ENCODE measurements at regions of chr18 and their contacts with region 1.

Region 1: DNA sequence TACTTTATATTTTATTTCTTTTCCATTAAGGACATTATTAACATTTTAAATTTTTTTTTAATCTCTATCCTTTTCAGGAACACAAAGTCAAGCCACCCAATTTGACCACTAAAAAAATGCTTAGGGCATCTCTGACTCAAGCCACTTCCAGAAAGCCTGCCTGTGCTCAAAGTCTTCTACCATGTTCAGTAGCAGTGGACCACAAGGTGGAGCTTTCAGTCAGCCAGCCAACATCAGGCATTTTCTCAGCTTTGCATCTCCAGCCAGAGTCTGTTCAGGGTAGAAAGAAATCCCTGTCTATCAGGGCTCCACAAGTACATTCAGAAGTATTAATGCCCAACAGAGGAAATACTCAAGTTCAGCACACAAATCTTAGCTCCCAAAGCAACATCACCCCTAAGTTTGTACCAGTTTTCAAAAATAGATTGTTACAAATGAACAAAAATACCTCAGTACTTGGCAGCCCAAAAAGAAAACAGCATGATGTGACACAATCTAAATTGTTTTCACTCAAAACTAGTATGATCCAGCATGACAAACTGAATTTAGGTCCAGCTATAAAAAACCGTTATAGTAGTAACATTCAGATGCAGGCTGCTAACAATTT is 37.6 kb downstream of the C18orf63 start:
- DNase-seq: peak in 4 of 5 donors; percentile 63 to 73 (median 68)
- ATAC-seq: peak; percentile 84 to 96 (median 92)
- H3K4me3 ChIP-seq: no peak overlapping the region
- H3K27ac ChIP-seq: no peak overlapping the region
- H3K4me1 ChIP-seq: peaks cover 0 to 9% (median 1%) of the 10 kb centered on the region in 12 donors
- H3K27me3 ChIP-seq: no peaks in the 10 kb centered on the region
- CTCF ChIP-seq: peak; percentile 52 to 88 (median 82)
- POLR2A ChIP-seq: no peak

Region 2: DNA sequence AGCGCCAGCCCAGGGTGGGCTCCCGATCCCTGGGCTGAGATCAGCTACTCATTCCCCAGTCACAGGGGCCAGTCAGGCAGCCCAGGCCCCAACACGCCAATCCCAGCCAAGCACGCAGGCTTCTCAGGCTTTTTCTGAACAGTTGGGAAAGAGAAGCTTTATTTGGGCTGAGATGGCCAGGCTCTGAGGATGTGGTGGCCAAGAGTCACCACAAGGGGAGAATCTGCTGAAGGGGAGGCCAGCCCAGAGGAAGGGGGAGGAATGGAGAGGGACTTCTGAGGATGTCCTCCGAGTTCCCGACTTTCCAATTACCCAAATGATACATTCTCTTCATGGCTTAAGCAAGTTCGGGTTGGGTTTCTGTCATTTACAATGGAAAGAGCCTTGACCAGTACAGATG is 106.6 kb after region 1 on chr18:
- intact Hi-C with region 1: no loop called
- DNase-seq: peak in 2 of 5 donors; percentile 25 to 57
- ATAC-seq: peak in 2 of 4 donors; percentile 8 to 25
- H3K4me3 ChIP-seq: no peak overlapping the region
- H3K27ac ChIP-seq: peak overlapping the region in 7 of 12 donors; percentile 9 to 91 (median 38)
- H3K4me1 ChIP-seq: peaks cover 0 to 40% (median 15%) of the 10 kb centered on the region in 12 donors
- H3K27me3 ChIP-seq: peaks cover 0 to 31% (median under 1%) of the 10 kb centered on the region in 9 donors
- CTCF ChIP-seq: peak in 9 of 12 donors; percentile 18 to 49 (median 32)
- POLR2A ChIP-seq: no peak

Region 3: DNA sequence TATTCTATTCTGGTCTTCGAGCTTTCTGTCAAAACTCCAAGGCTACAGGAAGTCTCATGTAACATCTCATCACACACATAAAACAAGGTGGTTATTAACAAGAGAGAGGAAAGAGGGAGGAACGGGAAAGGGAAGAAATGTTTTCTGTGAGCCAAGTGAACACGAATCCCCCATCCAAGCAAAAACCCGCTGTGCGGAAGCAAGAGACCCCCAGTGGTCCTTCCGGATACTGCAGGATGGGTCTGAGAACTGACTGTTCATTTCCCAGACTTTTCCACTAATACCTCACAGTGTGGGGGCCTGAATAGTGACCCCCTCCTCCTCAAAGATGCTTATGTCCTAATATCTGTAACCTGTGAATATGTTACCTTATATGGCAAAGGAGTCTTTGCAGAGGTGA is 122.9 kb after region 1 on chr18:
- intact Hi-C with region 1: loop called (anchors 1 to 5 kb)
- DNase-seq: peak in 3 of 5 donors; percentile 47 to 57 (median 57)
- ATAC-seq: peak in 3 of 4 donors; percentile 41 to 67 (median 64)
- H3K4me3 ChIP-seq: no peak overlapping the region
- H3K27ac ChIP-seq: no peak overlapping the region
- H3K4me1 ChIP-seq: peaks cover 0 to 27% (median 0%) of the 10 kb centered on the region in 12 donors
- H3K27me3 ChIP-seq: no peaks in the 10 kb centered on the region
- CTCF ChIP-seq: peak; percentile 58 to 86 (median 78)
- POLR2A ChIP-seq: no peak